AG04450 (cell line): ENCODE measurements at regions of chr5 and their contacts with region 1.

Region 1: DNA sequence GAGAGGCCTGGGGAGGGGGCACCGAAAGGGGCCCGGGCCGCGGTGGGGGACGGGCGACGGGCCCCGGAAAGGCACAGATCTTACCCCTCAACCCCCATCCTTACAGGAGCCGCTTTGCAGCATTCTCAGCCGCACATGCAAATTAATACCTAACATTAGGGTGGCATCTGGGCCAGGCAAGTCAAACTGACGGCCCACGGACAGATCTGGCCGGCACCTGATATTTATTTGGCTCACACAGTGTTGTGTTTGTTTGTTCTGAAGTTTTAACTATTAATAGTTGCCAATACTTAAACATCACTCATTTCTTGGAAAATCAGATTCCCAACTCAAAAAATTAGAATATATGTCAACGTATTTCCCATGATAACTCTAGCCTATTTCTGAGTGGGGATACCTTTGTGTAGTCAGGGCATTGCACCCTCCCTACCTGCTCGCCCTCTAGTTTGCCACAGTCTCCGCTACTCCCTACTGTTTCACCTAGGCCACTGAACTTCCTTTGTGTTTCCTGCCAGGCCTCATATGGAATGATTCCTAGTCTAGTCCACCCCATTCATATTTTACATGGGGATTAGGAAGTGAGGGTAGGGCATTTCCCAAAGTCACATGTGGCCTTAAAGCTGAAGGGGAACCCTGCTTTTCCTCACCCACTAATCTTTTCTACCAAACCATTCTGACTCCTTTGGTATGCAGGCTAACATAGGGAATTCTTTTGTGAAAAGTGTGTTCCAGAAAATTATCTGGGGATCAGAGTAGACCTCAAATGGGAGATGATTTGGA is 71.9 kb upstream of the LARP1 start:
- DNase-seq: no peak
- H3K4me3 ChIP-seq: peak overlapping the region; percentile 61
- H3K27ac ChIP-seq: no peak overlapping the region
- H3K27me3 ChIP-seq: no peaks in the 10 kb centered on the region
- CTCF ChIP-seq: no peak

Region 2: GRCh38 chr5:154663424-154663823 is 19.9 kb before region 1 on chr5:
- CTCF ChIA-PET with region 1: no interaction called
- POLR2A ChIA-PET with region 1: no interaction called
- DNase-seq: no peak
- H3K4me3 ChIP-seq: no peak overlapping the region
- H3K27ac ChIP-seq: no peak overlapping the region
- H3K27me3 ChIP-seq: no peaks in the 10 kb centered on the region
- CTCF ChIP-seq: no peak

Region 3: DNA sequence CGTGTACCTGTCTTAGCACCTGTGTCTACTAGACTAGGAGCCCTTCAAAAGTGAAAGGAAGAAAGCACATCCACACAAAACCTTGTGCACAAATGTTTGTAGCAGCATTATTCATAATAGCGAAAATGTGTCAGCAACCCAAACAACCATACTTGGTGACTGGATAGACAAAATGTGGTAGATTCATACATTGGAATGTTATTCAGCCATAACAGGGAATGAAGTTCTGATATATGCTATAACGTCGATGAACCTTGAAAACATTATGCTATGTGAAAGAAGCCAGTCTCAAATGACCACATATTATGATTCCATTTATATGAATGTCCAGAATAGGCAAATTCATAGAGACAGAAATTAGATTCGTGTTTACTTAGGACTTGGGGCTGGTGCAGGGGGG is 14.1 kb after region 1 on chr5:
- CTCF ChIA-PET with region 1: interaction called, 4 read pairs
- POLR2A ChIA-PET with region 1: interaction called, 14 read pairs
- DNase-seq: peak; percentile 10
- H3K4me3 ChIP-seq: no peak overlapping the region
- H3K27ac ChIP-seq: no peak overlapping the region
- H3K27me3 ChIP-seq: no peaks in the 10 kb centered on the region
- CTCF ChIP-seq: no peak